ENCODE measurements at regions of chr1 and their contacts with region 1.

Region 1: DNA sequence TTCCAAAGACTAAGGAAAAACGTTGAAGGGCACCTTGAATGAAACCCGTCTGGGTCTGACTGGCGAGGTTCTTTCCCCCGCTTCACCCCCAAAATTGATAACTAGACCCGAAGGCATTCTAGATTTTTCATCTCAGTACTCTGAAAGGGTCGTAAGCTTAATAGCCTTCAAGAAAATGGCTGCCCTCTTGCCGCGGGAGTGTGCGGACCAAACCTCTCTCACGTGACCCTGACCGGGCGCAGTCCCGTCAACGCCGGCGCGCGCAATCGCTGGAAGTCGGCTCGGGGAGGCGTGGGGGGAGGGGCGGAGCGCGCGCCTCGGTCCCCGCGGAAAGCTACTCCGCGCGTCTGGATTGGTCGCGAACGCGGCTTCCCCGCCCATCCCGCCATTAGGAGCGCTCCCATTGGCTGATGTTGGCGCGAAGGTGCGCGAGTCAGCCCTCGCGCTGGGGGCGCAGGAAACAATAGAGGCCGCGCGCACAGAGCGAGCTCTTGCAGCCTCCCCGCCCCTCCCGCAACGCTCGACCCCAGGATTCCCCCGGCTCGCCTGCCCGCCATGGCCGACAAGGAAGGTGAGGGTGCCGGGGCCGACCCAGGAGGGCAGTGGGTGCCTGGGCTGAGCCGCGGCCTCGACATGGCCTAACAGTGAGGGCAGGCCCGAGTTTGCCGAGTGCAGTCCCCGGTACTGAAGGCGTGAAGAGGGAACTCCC is at the start of gene RBBP4:
- DNase-seq: peak; percentile 91
- ATAC-seq: peak; percentile 92
- H3K4me3 ChIP-seq: peak within 1 kb of the TSS; percentile 89
- H3K27ac ChIP-seq: peak within 1 kb of the TSS; percentile 100
- H3K4me1 ChIP-seq: peaks cover 3% of the 10 kb centered on the region; the same call in 1 of the 2 replicates
- H3K27me3 ChIP-seq: no peaks in the 10 kb centered on the region
- CTCF ChIP-seq: no peak
- EP300 ChIP-seq: peak in 1 of 2 experiments; percentile 28; a peak in 1 of 4 replicates
- POLR2A ChIP-seq: peak; percentile 96
- RAD21 ChIP-seq: no peak
- polyA plus RNA-seq, gene RBBP4: 120 to 234 TPM

Region 2: GRCh38 chr1:32321712-32322291 is 329.1 kb before region 1 on chr1:
- CTCF ChIA-PET with region 1: no interaction called
- POLR2A ChIA-PET with region 1: no interaction called
- RAD21 ChIA-PET with region 1: no interaction called
- SMC1A ChIA-PET with region 1: no interaction called
- in situ Hi-C with region 1: no loop called
- intact Hi-C with region 1: no loop called
- DNase-seq: no peak
- ATAC-seq: peak; percentile 9; the same call in 1 of the 3 replicates
- H3K4me3 ChIP-seq: no peak overlapping the region
- H3K27ac ChIP-seq: peak overlapping the region; percentile 69
- H3K4me1 ChIP-seq: peaks cover 54% of the 10 kb centered on the region
- H3K27me3 ChIP-seq: no peaks in the 10 kb centered on the region
- CTCF ChIP-seq: no peak
- EP300 ChIP-seq: no peak
- POLR2A ChIP-seq: no peak
- RAD21 ChIP-seq: no peak

Region 3: GRCh38 chr1:32538887-32539583 is 111.9 kb before region 1 on chr1 and contains the start of gene ZBTB8A:
- CTCF ChIA-PET with region 1: no interaction called
- POLR2A ChIA-PET with region 1: no interaction called
- RAD21 ChIA-PET with region 1: interaction called, 6 read pairs
- SMC1A ChIA-PET with region 1: no interaction called
- in situ Hi-C with region 1: no loop called
- intact Hi-C with region 1: loop called (anchors 2 kb)
- DNase-seq: no peak
- ATAC-seq: peak; percentile 50
- H3K4me3 ChIP-seq: peak within 1 kb of the TSS; percentile 67
- H3K27ac ChIP-seq: no peak within 1 kb of the TSS
- H3K4me1 ChIP-seq: no peaks in the 10 kb centered on the region
- H3K27me3 ChIP-seq: peaks cover 0 to 1% of the 10 kb centered on the region in 2 experiments; a peak in 2 of 4 replicates
- CTCF ChIP-seq: no peak
- EP300 ChIP-seq: no peak
- POLR2A ChIP-seq: no peak
- RAD21 ChIP-seq: no peak
- polyA plus RNA-seq, gene ZBTB8A: 0.48 to 0.90 TPM

Region 4: DNA sequence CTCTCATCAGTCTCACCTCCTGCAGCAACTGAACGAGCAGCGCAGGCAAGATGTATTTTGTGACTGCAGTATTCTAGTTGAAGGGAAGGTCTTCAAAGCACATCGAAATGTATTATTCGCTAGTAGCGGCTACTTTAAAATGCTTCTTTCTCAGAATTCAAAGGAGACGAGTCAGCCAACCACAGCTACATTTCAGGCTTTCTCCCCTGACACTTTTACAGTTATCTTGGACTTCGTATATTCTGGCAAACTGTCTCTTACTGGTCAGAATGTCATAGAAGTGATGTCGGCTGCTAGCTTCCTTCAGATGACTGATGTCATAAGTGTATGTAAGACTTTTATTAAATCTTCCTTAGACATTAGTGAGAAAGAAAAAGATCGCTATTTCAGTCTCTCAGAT is 58.0 kb before region 1 on chr1:
- CTCF ChIA-PET with region 1: no interaction called
- POLR2A ChIA-PET with region 1: no interaction called
- RAD21 ChIA-PET with region 1: no interaction called
- SMC1A ChIA-PET with region 1: no interaction called
- in situ Hi-C with region 1: no loop called
- intact Hi-C with region 1: no loop called
- DNase-seq: no peak
- ATAC-seq: no peak
- H3K4me3 ChIP-seq: no peak overlapping the region
- H3K27ac ChIP-seq: no peak overlapping the region
- H3K4me1 ChIP-seq: no peaks in the 10 kb centered on the region
- H3K27me3 ChIP-seq: no peaks in the 10 kb centered on the region
- CTCF ChIP-seq: no peak
- EP300 ChIP-seq: no peak
- POLR2A ChIP-seq: no peak
- RAD21 ChIP-seq: no peak

Region 5: GRCh38 chr1:32619701-32620485 is 31.0 kb before region 1 on chr1:
- CTCF ChIA-PET with region 1: interaction called, 10 read pairs
- POLR2A ChIA-PET with region 1: interaction called, 5 read pairs
- RAD21 ChIA-PET with region 1: interaction called, 8 read pairs
- SMC1A ChIA-PET with region 1: interaction called, 9 read pairs
- in situ Hi-C with region 1: no loop called
- intact Hi-C with region 1: no loop called
- DNase-seq: peak; percentile 72
- ATAC-seq: peak; percentile 90
- H3K4me3 ChIP-seq: peak overlapping the region; percentile 12; the same call in 1 of the 2 replicates
- H3K27ac ChIP-seq: peak overlapping the region; percentile 80
- H3K4me1 ChIP-seq: peaks cover 39% of the 10 kb centered on the region
- H3K27me3 ChIP-seq: no peaks in the 10 kb centered on the region
- CTCF ChIP-seq: peak in 2 of 3 experiments; percentile 26 to 29; a peak in 2 of 6 replicates
- EP300 ChIP-seq: peak; percentile 55 to 70; a peak in 3 of 4 replicates
- POLR2A ChIP-seq: no peak
- RAD21 ChIP-seq: peak; percentile 42

Region 6: DNA sequence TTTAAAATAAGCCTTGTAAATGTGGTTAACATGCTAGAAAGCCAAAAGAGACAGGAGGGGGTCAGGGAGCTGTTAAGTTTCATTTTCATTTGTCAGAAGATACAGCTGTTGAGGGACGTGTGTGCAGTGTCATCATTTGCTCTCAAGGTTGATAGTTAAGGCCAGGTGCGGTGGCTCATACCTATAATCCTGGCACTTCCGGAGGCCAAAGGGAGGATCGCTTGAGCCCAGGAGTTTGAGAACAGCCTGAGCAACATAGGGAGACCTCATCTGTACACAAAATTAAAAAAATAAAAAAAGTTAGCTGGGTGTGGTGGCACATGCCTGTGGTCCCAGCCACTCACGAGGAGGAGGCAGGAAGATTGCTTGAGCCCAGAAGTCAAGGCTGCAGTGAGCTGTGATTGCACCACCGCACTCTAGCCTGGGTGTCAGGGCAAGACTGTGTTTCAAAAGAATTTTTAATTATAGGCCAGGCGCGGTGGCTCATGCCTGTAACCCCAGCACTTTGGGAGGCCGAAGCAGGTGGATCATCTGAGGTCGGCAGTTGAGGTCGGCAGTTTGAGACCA is 23.2 kb before region 1 on chr1:
- CTCF ChIA-PET with region 1: interaction called, 5 read pairs
- POLR2A ChIA-PET with region 1: interaction called, 7 read pairs
- RAD21 ChIA-PET with region 1: interaction called, 4 read pairs
- SMC1A ChIA-PET with region 1: interaction called, 6 read pairs
- in situ Hi-C with region 1: no loop called
- intact Hi-C with region 1: loop called (anchors 2 kb)
- DNase-seq: peak; percentile 69
- ATAC-seq: peak; percentile 89
- H3K4me3 ChIP-seq: peak overlapping the region; percentile 7; the same call in 1 of the 2 replicates
- H3K27ac ChIP-seq: peak overlapping the region; percentile 89
- H3K4me1 ChIP-seq: peaks cover 36% of the 10 kb centered on the region
- H3K27me3 ChIP-seq: no peaks in the 10 kb centered on the region
- CTCF ChIP-seq: no peak
- EP300 ChIP-seq: no peak
- POLR2A ChIP-seq: peak; percentile 53
- RAD21 ChIP-seq: no peak

Measured in GM12878 (cell line).